ENCODE measurements at regions of chr5 and their contacts with region 1.

Region 1: GRCh38 chr5:61933787-61934626 is 372.0 kb upstream of the KIF2A start:
- DNase-seq: peak; percentile 70
- H3K4me3 Mint-ChIP-seq: no peak overlapping the region
- H3K27ac Mint-ChIP-seq: no peak overlapping the region
- H3K4me1 Mint-ChIP-seq: no peaks in the 10 kb centered on the region
- H3K27me3 Mint-ChIP-seq: no peaks in the 10 kb centered on the region
- CTCF ChIP-seq: peak; percentile 75

Region 2: DNA sequence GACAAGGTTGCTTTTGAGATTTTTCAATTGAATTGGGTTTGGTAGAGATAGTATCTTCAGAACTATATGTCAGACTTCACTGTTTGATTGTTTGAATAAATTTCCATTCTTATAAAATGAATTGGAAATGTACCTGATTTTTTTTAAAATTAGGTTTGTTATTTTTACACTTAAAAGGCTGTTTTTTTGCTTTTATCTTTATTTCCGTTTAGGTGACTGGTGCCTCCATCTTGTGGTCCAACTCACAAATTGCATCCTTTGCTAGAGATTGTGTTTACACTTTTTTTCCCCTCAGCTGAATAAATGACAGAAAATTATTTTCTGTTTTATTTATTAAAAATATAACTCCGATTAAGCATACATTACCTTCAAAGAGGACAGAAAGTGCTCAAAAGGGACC is 973.4 kb before region 1 on chr5:
- CTCF ChIA-PET with region 1: no interaction called
- intact Hi-C with region 1: loop called (anchors 5 kb)
- DNase-seq: no peak
- H3K4me3 Mint-ChIP-seq: no peak overlapping the region
- H3K27ac Mint-ChIP-seq: no peak overlapping the region
- H3K4me1 Mint-ChIP-seq: no peaks in the 10 kb centered on the region
- H3K27me3 Mint-ChIP-seq: no peaks in the 10 kb centered on the region
- CTCF ChIP-seq: peak; percentile 39

Region 3: DNA sequence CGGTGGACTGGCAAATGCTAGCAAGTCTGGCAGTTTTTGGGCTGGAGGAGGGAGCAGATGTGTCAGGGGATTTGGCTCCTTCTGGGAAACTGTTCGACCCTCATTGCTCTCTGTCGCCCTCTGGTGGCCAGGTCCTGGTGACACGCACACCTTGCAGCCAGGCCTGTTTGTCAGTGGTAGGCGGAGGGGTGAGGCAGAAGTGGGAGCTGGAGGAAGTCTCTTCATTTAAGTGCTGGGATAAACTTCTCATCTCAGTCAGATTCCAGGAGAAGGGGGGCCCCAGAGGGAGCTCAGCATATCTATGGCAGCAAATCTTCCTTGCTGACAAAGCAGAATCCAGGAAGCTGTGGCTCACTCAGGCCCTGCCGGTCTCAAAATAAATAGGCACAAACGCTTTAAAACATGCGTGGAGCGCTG is 275.4 kb before region 1 on chr5:
- CTCF ChIA-PET with region 1: no interaction called
- intact Hi-C with region 1: loop called (anchors 1 kb)
- DNase-seq: peak; percentile 92
- H3K4me3 Mint-ChIP-seq: no peak overlapping the region
- H3K27ac Mint-ChIP-seq: no peak overlapping the region
- H3K4me1 Mint-ChIP-seq: no peaks in the 10 kb centered on the region
- H3K27me3 Mint-ChIP-seq: peaks cover 51% of the 10 kb centered on the region
- CTCF ChIP-seq: peak; percentile 96

Region 4: DNA sequence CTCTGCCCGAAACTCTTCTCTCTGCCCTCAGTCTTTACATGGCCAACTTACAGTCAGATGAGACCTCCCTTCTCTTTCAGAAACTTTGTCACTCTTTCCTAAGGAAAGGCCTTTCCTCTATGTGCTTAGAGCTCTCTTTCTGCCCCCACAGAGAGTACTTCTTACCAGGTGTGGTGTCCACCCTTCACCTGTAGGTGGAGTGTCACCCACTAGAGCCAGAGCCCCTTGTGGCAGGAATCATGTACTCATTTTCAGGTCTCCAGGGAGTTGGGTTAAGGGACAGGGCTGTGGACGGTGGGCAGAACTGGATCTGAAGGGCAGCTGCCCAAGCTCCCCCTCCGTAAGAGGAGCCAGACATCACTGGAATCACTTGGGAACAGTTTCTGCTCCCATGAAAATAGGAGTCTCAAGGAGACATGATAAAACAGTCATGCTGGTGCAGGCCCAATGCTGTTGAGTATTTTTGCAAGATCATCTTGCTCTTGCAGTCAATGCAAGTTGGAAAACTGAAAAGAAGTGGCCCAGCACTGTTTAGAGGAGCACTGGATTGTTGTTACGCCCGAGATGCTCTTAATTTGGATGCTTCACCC is 165.2 kb before region 1 on chr5:
- CTCF ChIA-PET with region 1: interaction called, 5 read pairs
- intact Hi-C with region 1: loop called (anchors 10 kb)
- DNase-seq: peak; percentile 71
- H3K4me3 Mint-ChIP-seq: no peak overlapping the region
- H3K27ac Mint-ChIP-seq: no peak overlapping the region
- H3K4me1 Mint-ChIP-seq: peaks cover 8% of the 10 kb centered on the region
- H3K27me3 Mint-ChIP-seq: peaks cover 89% of the 10 kb centered on the region
- CTCF ChIP-seq: peak; percentile 95

Region 5: DNA sequence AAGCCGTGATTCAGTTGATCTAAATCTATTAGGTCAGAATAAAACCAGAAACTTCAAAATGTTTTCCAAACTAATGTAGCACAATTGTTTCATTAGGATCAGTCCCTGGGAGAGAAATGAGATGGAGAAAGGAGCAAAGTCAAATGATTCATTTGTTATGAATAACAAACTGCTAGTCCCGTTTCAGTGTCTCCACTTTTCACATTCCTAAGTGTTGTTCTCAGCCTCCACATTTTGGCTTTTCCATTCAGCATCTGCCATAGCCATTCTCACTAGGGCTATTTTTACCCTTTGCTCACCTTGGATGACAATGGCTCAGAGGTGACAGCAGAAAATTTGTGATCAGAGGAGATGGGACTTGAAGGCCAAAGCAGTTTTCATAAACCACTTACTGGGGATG is 57.9 kb after region 1 on chr5:
- CTCF ChIA-PET with region 1: no interaction called
- intact Hi-C with region 1: no loop called
- DNase-seq: no peak
- H3K4me3 Mint-ChIP-seq: no peak overlapping the region
- H3K27ac Mint-ChIP-seq: no peak overlapping the region
- H3K4me1 Mint-ChIP-seq: peaks cover 14% of the 10 kb centered on the region
- H3K27me3 Mint-ChIP-seq: peaks cover 20% of the 10 kb centered on the region
- CTCF ChIP-seq: no peak

Region 6: GRCh38 chr5:62043289-62044280 is 109.6 kb after region 1 on chr5:
- CTCF ChIA-PET with region 1: no interaction called
- intact Hi-C with region 1: no loop called
- DNase-seq: no peak
- H3K4me3 Mint-ChIP-seq: no peak overlapping the region
- H3K27ac Mint-ChIP-seq: no peak overlapping the region
- H3K4me1 Mint-ChIP-seq: no peaks in the 10 kb centered on the region
- H3K27me3 Mint-ChIP-seq: peaks cover 67% of the 10 kb centered on the region
- CTCF ChIP-seq: no peak

Region 7: GRCh38 chr5:62143268-62144229 is 209.5 kb after region 1 on chr5:
- CTCF ChIA-PET with region 1: interaction called, 3 read pairs
- intact Hi-C with region 1: loop called (anchors 1 kb)
- DNase-seq: peak; percentile 6
- H3K4me3 Mint-ChIP-seq: no peak overlapping the region
- H3K27ac Mint-ChIP-seq: no peak overlapping the region
- H3K4me1 Mint-ChIP-seq: no peaks in the 10 kb centered on the region
- H3K27me3 Mint-ChIP-seq: peaks cover 78% of the 10 kb centered on the region
- CTCF ChIP-seq: peak; percentile 25